T-cell (primary cell): ENCODE measurements at regions of chr2 and their contacts with region 1.

Region 1: DNA sequence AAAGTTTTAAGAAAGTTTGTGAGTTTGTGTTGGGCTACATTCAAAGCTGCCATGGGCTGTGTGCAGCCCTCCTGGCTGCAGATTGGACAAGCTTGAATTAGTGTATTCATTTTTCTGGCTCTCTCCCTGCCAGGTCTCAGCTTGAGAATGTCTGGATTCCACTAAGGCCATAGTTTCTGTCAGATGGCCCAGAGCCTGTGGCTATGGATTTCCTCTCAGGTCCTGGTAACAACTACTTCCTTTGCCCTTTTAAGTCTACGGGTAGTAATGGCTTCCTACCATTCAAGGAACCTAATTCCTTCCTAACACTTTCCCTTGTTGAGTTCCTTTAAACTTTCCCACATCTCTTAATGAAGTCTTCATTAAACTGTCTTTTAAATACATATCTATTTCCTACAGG is 24.3 kb upstream of the PSMD14 start:
- DNase-seq: no peak
- ATAC-seq: no peak
- H3K4me3 ChIP-seq: no peak overlapping the region
- H3K4me3 Mint-ChIP-seq: no peak overlapping the region
- H3K27ac ChIP-seq: no peak overlapping the region
- H3K27ac Mint-ChIP-seq: no peak overlapping the region
- H3K4me1 ChIP-seq: peaks cover 0 to 6% of the 10 kb centered on the region in 2 experiments
- H3K4me1 Mint-ChIP-seq: no peaks in the 10 kb centered on the region
- H3K27me3 ChIP-seq: peaks cover 0 to 29% of the 10 kb centered on the region in 2 experiments
- H3K27me3 Mint-ChIP-seq: peaks cover 32 to 35% of the 10 kb centered on the region in 2 donors

Region 2: DNA sequence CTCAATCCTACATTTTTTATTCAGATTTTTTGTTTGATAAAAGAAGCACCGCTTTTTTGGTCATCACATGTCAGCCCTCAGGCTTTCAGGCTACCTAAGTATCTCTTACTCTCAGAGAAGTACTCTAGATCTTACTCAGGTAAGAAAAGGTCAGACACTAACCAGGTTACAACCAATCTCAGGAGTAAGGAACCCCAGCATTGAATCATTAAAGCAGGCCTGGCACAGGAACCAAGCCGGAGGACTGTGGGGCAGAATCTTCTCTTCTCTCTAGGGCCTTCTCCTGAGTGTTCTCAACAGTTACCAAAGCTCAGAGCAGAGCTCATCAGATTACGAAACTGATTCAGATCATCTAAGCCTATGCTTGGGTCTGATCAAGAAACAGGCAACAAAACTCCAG is 818.5 kb before region 1 on chr2:
- CTCF ChIA-PET with region 1: no interaction called
- POLR2A ChIA-PET with region 1: no interaction called
- DNase-seq: no peak
- ATAC-seq: peak; percentile 33 to 74 (median 52)
- H3K4me3 ChIP-seq: no peak overlapping the region
- H3K4me3 Mint-ChIP-seq: peak overlapping the region in 1 of 3 donors; percentile 49
- H3K27ac ChIP-seq: peak overlapping the region; percentile 26
- H3K27ac Mint-ChIP-seq: peak overlapping the region; percentile 29 to 69
- H3K4me1 ChIP-seq: peaks cover 13 to 50% of the 10 kb centered on the region in 2 experiments
- H3K4me1 Mint-ChIP-seq: peaks cover 79 to 90% (median 90%) of the 10 kb centered on the region in 3 donors
- H3K27me3 ChIP-seq: no peaks in the 10 kb centered on the region
- H3K27me3 Mint-ChIP-seq: no peaks in the 10 kb centered on the region

Region 3: DNA sequence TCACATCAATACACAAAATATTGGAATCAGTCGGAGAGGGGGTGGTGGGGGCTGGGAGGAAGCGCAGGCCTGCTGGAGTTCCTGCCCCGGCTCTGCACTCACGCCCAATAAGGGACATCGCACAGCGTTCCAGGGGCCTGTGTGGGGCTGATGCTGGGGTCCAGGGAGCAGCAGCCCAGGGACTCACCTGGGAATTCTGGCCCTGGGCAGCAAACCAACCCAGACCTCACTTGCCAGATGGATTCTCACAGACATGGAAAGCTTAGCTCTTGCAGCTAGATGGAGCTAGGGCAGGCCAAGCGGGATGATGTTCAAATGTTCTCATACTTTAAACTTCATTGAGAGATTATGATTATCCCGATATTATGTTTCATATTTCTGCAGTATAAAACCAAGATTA is 390.3 kb before region 1 on chr2:
- CTCF ChIA-PET with region 1: no interaction called
- POLR2A ChIA-PET with region 1: no interaction called
- DNase-seq: no peak
- ATAC-seq: no peak
- H3K4me3 ChIP-seq: no peak overlapping the region
- H3K4me3 Mint-ChIP-seq: no peak overlapping the region
- H3K27ac ChIP-seq: no peak overlapping the region
- H3K27ac Mint-ChIP-seq: no peak overlapping the region
- H3K4me1 ChIP-seq: no peaks in the 10 kb centered on the region
- H3K4me1 Mint-ChIP-seq: no peaks in the 10 kb centered on the region
- H3K27me3 ChIP-seq: no peaks in the 10 kb centered on the region
- H3K27me3 Mint-ChIP-seq: no peaks in the 10 kb centered on the region

Region 4: DNA sequence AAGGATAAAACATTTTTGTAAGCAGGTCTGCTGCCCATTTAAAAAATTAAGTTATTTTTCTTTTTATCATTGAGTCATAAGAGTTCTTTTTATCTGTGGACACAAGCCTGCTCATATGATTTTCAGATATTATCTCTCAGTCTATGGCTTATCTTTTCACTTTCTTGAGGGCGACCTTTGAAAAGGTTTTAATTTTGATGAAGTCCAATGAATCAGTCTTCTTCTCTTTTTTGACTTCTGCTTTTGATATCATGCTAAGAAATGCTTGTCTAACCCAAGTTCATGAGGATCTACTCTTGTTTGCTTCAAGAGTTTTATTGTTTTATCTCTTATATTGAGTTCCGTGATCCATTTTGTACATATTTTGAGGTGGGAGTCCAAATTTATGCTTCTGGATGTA is 60.8 kb after region 1 on chr2:
- CTCF ChIA-PET with region 1: no interaction called
- POLR2A ChIA-PET with region 1: interaction called in 1 of 2 experiments, 27 read pairs
- DNase-seq: no peak
- ATAC-seq: no peak
- H3K4me3 ChIP-seq: no peak overlapping the region
- H3K4me3 Mint-ChIP-seq: no peak overlapping the region
- H3K27ac ChIP-seq: no peak overlapping the region
- H3K27ac Mint-ChIP-seq: no peak overlapping the region
- H3K4me1 ChIP-seq: no peaks in the 10 kb centered on the region
- H3K4me1 Mint-ChIP-seq: peaks cover 28 to 33% (median 32%) of the 10 kb centered on the region in 3 donors
- H3K27me3 ChIP-seq: no peaks in the 10 kb centered on the region
- H3K27me3 Mint-ChIP-seq: no peaks in the 10 kb centered on the region

Region 5: GRCh38 chr2:161373942-161374341 is 90.0 kb after region 1 on chr2:
- CTCF ChIA-PET with region 1: no interaction called
- POLR2A ChIA-PET with region 1: no interaction called
- DNase-seq: no peak
- ATAC-seq: no peak
- H3K4me3 ChIP-seq: no peak overlapping the region
- H3K4me3 Mint-ChIP-seq: no peak overlapping the region
- H3K27ac ChIP-seq: no peak overlapping the region
- H3K27ac Mint-ChIP-seq: no peak overlapping the region
- H3K4me1 ChIP-seq: no peaks in the 10 kb centered on the region
- H3K4me1 Mint-ChIP-seq: no peaks in the 10 kb centered on the region
- H3K27me3 ChIP-seq: no peaks in the 10 kb centered on the region
- H3K27me3 Mint-ChIP-seq: no peaks in the 10 kb centered on the region